ENCODE measurements at regions of chr19 and their contacts with region 1.

Region 1: DNA sequence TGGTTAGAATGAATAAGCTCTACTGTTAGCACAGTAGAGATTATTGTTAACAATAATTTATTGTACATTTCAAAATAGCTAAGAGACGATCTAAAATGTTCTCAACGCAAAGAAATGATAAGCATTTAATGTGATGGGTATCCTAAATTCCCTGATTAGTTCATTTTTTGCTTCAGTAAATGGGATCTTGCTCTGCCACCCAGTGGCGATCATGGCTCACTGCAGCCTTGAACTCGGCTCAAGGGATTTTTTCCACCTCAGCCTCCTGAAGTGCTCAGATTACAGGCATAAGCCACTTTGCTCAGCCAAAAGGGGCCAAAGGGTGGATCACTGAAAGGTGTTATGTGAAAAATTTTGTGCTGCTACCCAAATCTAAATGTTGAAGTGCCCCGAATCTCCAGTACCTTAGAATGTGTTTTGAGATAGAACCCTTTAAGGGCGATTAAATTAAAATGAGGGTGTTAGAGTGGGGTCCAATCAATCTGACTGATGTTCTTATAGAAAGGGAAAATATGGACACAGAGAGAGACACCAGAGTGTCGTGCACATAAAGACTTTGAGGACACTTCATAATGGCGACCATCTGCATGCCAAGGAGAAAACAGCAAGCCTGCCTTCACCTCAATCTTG is 31.5 kb upstream of the ZNF766 start:
- DNase-seq: no peak
- CTCF ChIP-seq: peak; percentile 95

Region 2: GRCh38 chr19:52189735-52190486 is 48.0 kb before region 1 on chr19 and contains the start of gene PPP2R1A:
- CTCF ChIA-PET with region 1: interaction called, 11 read pairs
- POLR2A ChIA-PET with region 1: no interaction called
- DNase-seq: peak; percentile 95
- CTCF ChIP-seq: no peak

Region 3: GRCh38 chr19:52206481-52206880 is 31.4 kb before region 1 on chr19:
- CTCF ChIA-PET with region 1: interaction called, 11 read pairs
- POLR2A ChIA-PET with region 1: no interaction called
- DNase-seq: no peak
- CTCF ChIP-seq: no peak

Region 4: GRCh38 chr19:52227196-52227940 is 10.5 kb before region 1 on chr19:
- CTCF ChIA-PET with region 1: interaction called, 25 read pairs
- POLR2A ChIA-PET with region 1: no interaction called
- DNase-seq: no peak
- CTCF ChIP-seq: no peak

Region 5: DNA sequence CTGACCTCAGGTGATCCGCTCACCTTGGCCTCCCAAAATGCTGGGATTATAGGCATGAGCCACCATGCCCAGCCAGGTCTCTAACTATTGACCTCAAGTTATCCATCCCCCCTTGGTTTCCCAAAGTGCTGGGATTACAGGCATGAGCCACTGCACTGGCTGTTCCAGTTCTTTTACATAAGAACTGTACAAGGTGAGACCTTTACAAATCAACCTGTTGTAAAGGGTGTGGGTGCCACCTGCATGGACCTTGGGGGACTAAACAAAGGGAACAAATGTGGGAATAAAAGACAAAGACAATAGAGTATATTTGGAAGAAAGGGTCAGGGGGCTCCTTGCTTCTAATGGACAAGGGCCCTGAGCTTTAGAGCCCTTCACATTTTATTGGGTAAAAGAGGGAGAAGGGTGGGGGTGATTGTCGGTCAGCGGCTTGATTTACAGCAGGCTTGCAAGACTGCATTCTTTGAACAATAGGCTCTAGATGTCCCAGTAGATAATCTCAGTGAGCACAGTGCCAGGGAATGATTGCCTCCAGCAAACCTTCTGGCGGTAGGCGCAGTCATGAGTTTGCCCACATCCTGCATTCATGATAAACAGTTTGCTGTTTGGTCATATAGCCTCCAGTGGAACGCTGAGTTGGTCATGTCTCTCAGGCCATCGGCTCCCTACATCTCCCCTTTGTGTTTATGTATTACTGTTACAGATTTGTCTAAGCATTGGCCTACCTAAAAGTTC is 172.2 kb after region 1 on chr19:
- CTCF ChIA-PET with region 1: no interaction called
- POLR2A ChIA-PET with region 1: no interaction called
- DNase-seq: no peak
- CTCF ChIP-seq: no peak

Region 6: DNA sequence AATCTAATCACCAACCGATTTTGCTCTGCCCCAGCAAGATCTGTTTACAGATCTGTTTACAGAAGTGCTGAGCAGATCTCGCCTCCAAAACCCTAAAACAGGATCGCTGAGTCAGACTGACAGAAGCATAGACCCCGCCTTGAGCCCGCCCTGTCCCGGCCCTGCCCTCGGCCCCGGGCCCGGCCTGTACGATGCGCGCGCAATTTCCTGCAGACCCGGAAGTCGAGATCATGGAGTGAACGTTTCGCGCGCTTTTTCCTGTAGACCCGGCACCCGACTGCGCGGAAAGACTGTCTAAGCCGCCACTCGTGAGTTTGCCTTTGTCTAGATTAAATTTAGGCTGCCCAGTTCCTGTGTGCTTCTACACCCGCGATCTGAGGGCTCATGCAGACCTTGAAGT is 191.1 kb after region 1 on chr19 and contains the start of gene ZNF534:
- CTCF ChIA-PET with region 1: no interaction called
- POLR2A ChIA-PET with region 1: no interaction called
- DNase-seq: no peak
- CTCF ChIP-seq: no peak

Measured in GM10248 (cell line).